ENCODE measurements at regions of chr3 and their contacts with region 1.

Region 1: GRCh38 chr3:108914774-108915641 is 38.7 kb downstream of the GUCA1C start:
- DNase-seq: peak; percentile 73 to 75 (median 73)
- H3K4me3 ChIP-seq: no peak overlapping the region
- H3K4me3 Mint-ChIP-seq: peak overlapping the region in 7 of 8 donors; percentile 41 to 77 (median 61)
- H3K27ac ChIP-seq: no peak overlapping the region
- H3K27ac Mint-ChIP-seq: peak overlapping the region in 2 of 7 donors; percentile 29 to 66
- H3K4me1 ChIP-seq: peaks cover 9% of the 10 kb centered on the region
- H3K4me1 Mint-ChIP-seq: peaks cover 15 to 23% (median 16%) of the 10 kb centered on the region in 4 donors
- H3K27me3 ChIP-seq: no peaks in the 10 kb centered on the region
- H3K27me3 Mint-ChIP-seq: peaks cover 2 to 4% of the 10 kb centered on the region in 2 donors

Region 2: GRCh38 chr3:108489771-108490170 is 425.2 kb before region 1 on chr3:
- CTCF ChIA-PET with region 1: interaction called, 75 read pairs
- POLR2A ChIA-PET with region 1: no interaction called
- intact Hi-C with region 1: loop called (anchors 1 kb)
- DNase-seq: peak; percentile 56 to 64 (median 60)
- H3K4me3 ChIP-seq: no peak overlapping the region
- H3K4me3 Mint-ChIP-seq: no peak overlapping the region
- H3K27ac ChIP-seq: no peak overlapping the region
- H3K27ac Mint-ChIP-seq: no peak overlapping the region
- H3K4me1 ChIP-seq: no peaks in the 10 kb centered on the region
- H3K4me1 Mint-ChIP-seq: peaks cover 0 to 4% (median 2%) of the 10 kb centered on the region in 4 donors
- H3K27me3 ChIP-seq: no peaks in the 10 kb centered on the region
- H3K27me3 Mint-ChIP-seq: peaks cover 0 to 2% of the 10 kb centered on the region in 2 donors

Region 3: GRCh38 chr3:108589146-108589997 is 325.6 kb before region 1 on chr3 and contains the starts of genes CIP2A and DZIP3:
- CTCF ChIA-PET with region 1: interaction called, 19 read pairs
- POLR2A ChIA-PET with region 1: interaction called, 6 read pairs
- intact Hi-C with region 1: no loop called
- DNase-seq: peak; percentile 85 to 93 (median 89)
- H3K4me3 ChIP-seq: peak within 1 kb of the TSS; percentile 80 to 98
- H3K4me3 Mint-ChIP-seq: peak within 1 kb of the TSS; percentile 92 to 98 (median 97)
- H3K27ac ChIP-seq: peak within 1 kb of the TSS; percentile 92
- H3K27ac Mint-ChIP-seq: peak within 1 kb of the TSS; percentile 97 to 100 (median 99)
- H3K4me1 ChIP-seq: peaks cover 28% of the 10 kb centered on the region
- H3K4me1 Mint-ChIP-seq: peaks cover 15 to 38% (median 25%) of the 10 kb centered on the region in 4 donors
- H3K27me3 ChIP-seq: no peaks in the 10 kb centered on the region
- H3K27me3 Mint-ChIP-seq: no peaks in the 10 kb centered on the region
- total RNA-seq, gene CIP2A: 3.4 to 3.9 TPM
- total RNA-seq, gene DZIP3: 15.3 to 18.5 TPM

Region 4: DNA sequence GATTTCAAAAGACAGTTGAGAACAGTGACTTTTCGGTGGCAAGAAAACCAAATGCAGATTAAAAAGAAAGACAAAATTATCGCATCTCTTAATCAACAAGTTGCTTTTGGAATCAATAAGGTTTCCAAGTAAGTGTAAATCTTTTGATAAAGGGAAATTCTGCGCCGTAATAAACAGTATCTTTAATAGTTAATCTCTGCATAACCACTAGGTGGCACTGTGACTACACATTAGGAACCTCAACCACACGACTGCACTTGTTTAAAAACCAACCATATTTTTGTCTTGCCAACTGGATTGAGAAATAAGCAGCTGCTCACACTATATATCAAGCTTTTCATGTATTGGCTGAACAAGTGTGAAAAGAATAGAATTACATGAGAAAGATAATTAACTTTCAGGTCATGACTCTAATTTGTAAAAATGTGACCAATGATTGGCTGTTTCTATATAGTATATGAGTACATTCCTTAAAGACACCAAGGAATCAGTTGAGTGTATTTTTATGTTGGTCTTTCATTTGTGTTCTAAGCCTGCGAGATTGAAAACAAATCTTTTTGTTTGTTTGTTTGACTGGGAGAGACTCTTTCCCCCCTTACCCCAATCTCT is 252.8 kb before region 1 on chr3:
- CTCF ChIA-PET with region 1: interaction called, 191 read pairs
- POLR2A ChIA-PET with region 1: interaction called, 9 read pairs
- intact Hi-C with region 1: loop called (anchors 1 kb)
- DNase-seq: peak; percentile 47 to 77 (median 70)
- H3K4me3 ChIP-seq: no peak overlapping the region
- H3K4me3 Mint-ChIP-seq: peak overlapping the region in 1 of 8 donors; percentile 9
- H3K27ac ChIP-seq: no peak overlapping the region
- H3K27ac Mint-ChIP-seq: no peak overlapping the region
- H3K4me1 ChIP-seq: peaks cover 4% of the 10 kb centered on the region
- H3K4me1 Mint-ChIP-seq: peaks cover 7 to 16% (median 12%) of the 10 kb centered on the region in 4 donors
- H3K27me3 ChIP-seq: no peaks in the 10 kb centered on the region
- H3K27me3 Mint-ChIP-seq: no peaks in the 10 kb centered on the region

Region 5: DNA sequence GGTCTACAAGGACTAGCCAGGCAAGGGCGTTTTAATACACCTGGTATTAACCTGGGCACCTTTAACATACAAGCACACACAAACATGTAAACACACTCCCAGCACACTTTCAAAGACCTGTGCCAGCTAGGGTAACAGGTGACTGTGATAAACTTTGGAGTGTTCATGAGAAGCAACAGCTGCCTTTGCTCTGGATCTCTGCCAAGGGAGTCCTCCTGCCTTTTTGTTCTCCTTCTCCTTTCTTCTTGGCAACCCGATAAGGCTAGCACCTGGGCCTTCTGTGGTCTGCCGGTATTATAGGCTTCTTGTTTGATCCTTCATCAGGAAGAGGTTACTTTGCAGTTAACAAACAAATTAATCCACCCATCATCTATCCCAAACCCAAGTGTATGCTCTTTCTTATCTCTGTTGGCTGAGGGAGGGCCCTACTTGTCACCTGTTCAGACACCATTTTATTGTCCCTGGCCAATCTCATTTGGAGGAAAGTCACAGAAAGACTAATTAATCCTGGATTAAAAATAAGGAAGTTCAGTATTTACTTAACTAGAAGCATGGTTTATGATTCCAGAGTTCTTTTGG is 157.5 kb before region 1 on chr3 and contains the start of gene RETNLB:
- CTCF ChIA-PET with region 1: interaction called, 20 read pairs
- POLR2A ChIA-PET with region 1: no interaction called
- intact Hi-C with region 1: no loop called
- DNase-seq: no peak
- H3K4me3 ChIP-seq: no peak within 1 kb of the TSS
- H3K4me3 Mint-ChIP-seq: no peak within 1 kb of the TSS
- H3K27ac ChIP-seq: no peak within 1 kb of the TSS
- H3K27ac Mint-ChIP-seq: peak within 1 kb of the TSS in 1 of 7 donors; percentile 41
- H3K4me1 ChIP-seq: no peaks in the 10 kb centered on the region
- H3K4me1 Mint-ChIP-seq: peaks cover 0 to 8% (median 4%) of the 10 kb centered on the region in 4 donors
- H3K27me3 ChIP-seq: no peaks in the 10 kb centered on the region
- H3K27me3 Mint-ChIP-seq: peaks cover 0 to 2% of the 10 kb centered on the region in 2 donors
- total RNA-seq, gene RETNLB: not detected

Region 6: DNA sequence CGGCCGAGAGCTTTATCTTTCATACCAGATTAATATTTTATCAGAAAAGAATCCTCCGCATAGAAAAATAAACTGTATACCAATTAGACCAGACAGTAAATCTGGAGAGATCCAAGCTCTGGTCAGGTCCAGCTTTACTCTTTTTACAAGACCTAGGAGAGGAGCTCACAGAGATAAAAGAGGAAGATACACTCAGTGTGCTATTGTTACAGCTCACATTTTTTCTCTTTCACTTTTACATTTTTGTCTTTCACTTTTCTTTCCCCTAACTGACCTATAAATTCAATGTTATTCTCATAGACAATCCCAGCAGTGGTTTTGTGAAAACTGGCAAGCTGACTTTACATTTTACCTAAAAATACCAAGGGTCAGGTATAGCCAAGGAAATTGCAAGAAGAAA is 17.1 kb before region 1 on chr3:
- CTCF ChIA-PET with region 1: interaction called, 13 read pairs
- POLR2A ChIA-PET with region 1: no interaction called
- intact Hi-C with region 1: no loop called
- DNase-seq: no peak
- H3K4me3 ChIP-seq: no peak overlapping the region
- H3K4me3 Mint-ChIP-seq: no peak overlapping the region
- H3K27ac ChIP-seq: no peak overlapping the region
- H3K27ac Mint-ChIP-seq: peak overlapping the region in 1 of 7 donors; percentile 72
- H3K4me1 ChIP-seq: no peaks in the 10 kb centered on the region
- H3K4me1 Mint-ChIP-seq: peaks cover 5 to 12% (median 8%) of the 10 kb centered on the region in 4 donors
- H3K27me3 ChIP-seq: no peaks in the 10 kb centered on the region
- H3K27me3 Mint-ChIP-seq: peaks cover 0 to 2% of the 10 kb centered on the region in 2 donors

Region 7: GRCh38 chr3:109137761-109138160 is 222.8 kb after region 1 on chr3:
- CTCF ChIA-PET with region 1: no interaction called
- POLR2A ChIA-PET with region 1: no interaction called
- intact Hi-C with region 1: no loop called
- DNase-seq: no peak
- H3K4me3 ChIP-seq: no peak overlapping the region
- H3K4me3 Mint-ChIP-seq: no peak overlapping the region
- H3K27ac ChIP-seq: no peak overlapping the region
- H3K27ac Mint-ChIP-seq: no peak overlapping the region
- H3K4me1 ChIP-seq: no peaks in the 10 kb centered on the region
- H3K4me1 Mint-ChIP-seq: no peaks in the 10 kb centered on the region
- H3K27me3 ChIP-seq: no peaks in the 10 kb centered on the region
- H3K27me3 Mint-ChIP-seq: peaks cover 2 to 6% of the 10 kb centered on the region in 2 donors